ENCODE measurements at regions of chr5 and their contacts with region 1.

Region 1: GRCh38 chr5:151002250-151002649 is 18.1 kb upstream of the GPX3 start:
- DNase-seq: peak in 1 of 2 donors; percentile 74
- H3K4me3 ChIP-seq: no peak overlapping the region
- CTCF ChIP-seq: peak in 1 of 3 donors; percentile 39
- POLR2A ChIP-seq: no peak

Region 2: GRCh38 chr5:151051066-151051930 is 49.0 kb after region 1 on chr5:
- intact Hi-C with region 1: loop called (anchors 5 kb)
- DNase-seq: peak; percentile 77 to 97
- H3K4me3 ChIP-seq: no peak overlapping the region
- CTCF ChIP-seq: peak in 1 of 3 donors; percentile 69
- POLR2A ChIP-seq: no peak

Region 3: GRCh38 chr5:151115274-151115905 is 113.1 kb after region 1 on chr5:
- intact Hi-C with region 1: loop called (anchors 5 kb)
- DNase-seq: peak; percentile 68 to 96
- H3K4me3 ChIP-seq: no peak overlapping the region
- CTCF ChIP-seq: peak in 1 of 3 donors; percentile 94
- POLR2A ChIP-seq: no peak

Measured in lower leg skin (tissue), 4 donors.